Calu3 (cell line): ENCODE measurements at regions of chr10 and their contacts with region 1.

Region 1: GRCh38 chr10:90148116-90148855 is 446.9 kb downstream of the KIF20B start:
- DNase-seq: peak; percentile 14
- H3K4me3 Mint-ChIP-seq: no peak overlapping the region
- H3K27ac Mint-ChIP-seq: no peak overlapping the region
- H3K4me1 Mint-ChIP-seq: no peaks in the 10 kb centered on the region
- H3K27me3 Mint-ChIP-seq: no peaks in the 10 kb centered on the region
- CTCF ChIP-seq: peak; percentile 15

Region 2: GRCh38 chr10:89929282-89930026 is 218.8 kb before region 1 on chr10:
- CTCF ChIA-PET with region 1: no interaction called
- intact Hi-C with region 1: no loop called
- DNase-seq: no peak
- H3K4me3 Mint-ChIP-seq: no peak overlapping the region
- H3K27ac Mint-ChIP-seq: no peak overlapping the region
- H3K4me1 Mint-ChIP-seq: no peaks in the 10 kb centered on the region
- H3K27me3 Mint-ChIP-seq: peaks cover 2% of the 10 kb centered on the region
- CTCF ChIP-seq: no peak

Region 3: DNA sequence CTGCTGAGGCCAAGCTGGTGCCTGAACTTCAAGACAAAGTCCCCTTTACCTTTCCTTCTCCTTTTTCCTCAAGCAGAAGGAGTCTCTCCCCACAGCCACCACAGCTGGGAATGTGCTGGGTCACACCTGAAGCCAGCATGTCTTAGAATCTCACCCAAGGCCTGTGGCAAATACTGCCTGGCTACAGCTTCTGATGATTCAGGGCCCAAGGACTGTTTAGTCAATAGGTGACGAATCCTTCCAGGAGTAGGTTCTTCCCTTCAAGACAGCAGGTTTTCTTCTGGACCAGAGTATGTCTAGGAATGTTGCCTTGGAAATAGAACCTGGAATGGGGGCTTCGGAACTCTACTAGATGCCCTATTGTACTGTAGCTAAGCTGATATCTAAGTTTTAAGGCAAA is 72.3 kb before region 1 on chr10:
- CTCF ChIA-PET with region 1: no interaction called
- intact Hi-C with region 1: no loop called
- DNase-seq: no peak
- H3K4me3 Mint-ChIP-seq: no peak overlapping the region
- H3K27ac Mint-ChIP-seq: no peak overlapping the region
- H3K4me1 Mint-ChIP-seq: no peaks in the 10 kb centered on the region
- H3K27me3 Mint-ChIP-seq: no peaks in the 10 kb centered on the region
- CTCF ChIP-seq: no peak

Region 4: DNA sequence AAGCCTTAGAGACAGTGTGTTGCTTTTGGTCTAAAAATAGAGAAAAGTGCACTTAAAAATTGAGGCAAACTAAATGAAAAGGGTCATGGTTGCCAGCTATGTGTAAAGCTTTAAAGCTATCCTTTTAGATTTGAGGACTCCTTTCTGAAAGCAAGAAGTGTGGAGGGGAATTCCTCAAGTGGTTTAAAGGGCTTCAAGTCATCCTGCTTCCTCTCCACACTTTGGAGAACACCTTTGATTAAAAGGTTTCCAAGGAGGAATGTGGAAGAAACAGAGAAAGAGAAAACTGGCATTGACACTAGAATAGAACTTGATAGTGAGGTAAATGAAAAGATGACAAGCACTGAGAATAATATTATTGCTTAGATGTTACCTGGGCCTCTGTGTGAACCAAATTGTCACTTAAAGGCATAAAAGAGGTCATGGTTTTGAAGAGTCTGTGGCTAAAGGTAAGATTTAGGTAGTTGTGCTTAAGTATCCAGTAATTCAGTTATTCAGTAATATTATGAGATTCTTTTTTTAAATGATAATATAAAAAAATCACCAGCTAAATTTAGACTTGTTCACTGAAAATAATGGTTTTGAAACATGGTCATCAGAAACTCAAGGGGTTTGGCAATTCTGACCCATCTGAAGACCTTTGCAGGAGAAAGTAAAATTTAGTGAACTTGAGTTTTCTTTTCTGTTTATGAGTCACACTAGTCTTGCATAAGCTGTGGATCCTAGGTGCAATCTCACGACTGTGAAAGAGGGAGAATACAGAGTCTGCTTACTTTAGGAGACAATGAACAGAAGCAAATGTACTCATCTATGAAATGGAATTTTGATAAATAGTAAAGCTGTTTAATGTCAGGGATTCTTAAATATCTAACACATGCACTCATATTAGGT is 19.1 kb after region 1 on chr10:
- CTCF ChIA-PET with region 1: no interaction called
- intact Hi-C with region 1: no loop called
- DNase-seq: no peak
- H3K4me3 Mint-ChIP-seq: no peak overlapping the region
- H3K27ac Mint-ChIP-seq: no peak overlapping the region
- H3K4me1 Mint-ChIP-seq: no peaks in the 10 kb centered on the region
- H3K27me3 Mint-ChIP-seq: peaks cover 22% of the 10 kb centered on the region
- CTCF ChIP-seq: no peak

Region 5: GRCh38 chr10:90592638-90593302 is 444.5 kb after region 1 on chr10:
- CTCF ChIA-PET with region 1: interaction called, 8 read pairs
- intact Hi-C with region 1: loop called (anchors 10 kb)
- DNase-seq: peak; percentile 38
- H3K4me3 Mint-ChIP-seq: no peak overlapping the region
- H3K27ac Mint-ChIP-seq: no peak overlapping the region
- H3K4me1 Mint-ChIP-seq: peaks cover 7% of the 10 kb centered on the region
- H3K27me3 Mint-ChIP-seq: peaks cover 62% of the 10 kb centered on the region
- CTCF ChIP-seq: no peak

Region 6: DNA sequence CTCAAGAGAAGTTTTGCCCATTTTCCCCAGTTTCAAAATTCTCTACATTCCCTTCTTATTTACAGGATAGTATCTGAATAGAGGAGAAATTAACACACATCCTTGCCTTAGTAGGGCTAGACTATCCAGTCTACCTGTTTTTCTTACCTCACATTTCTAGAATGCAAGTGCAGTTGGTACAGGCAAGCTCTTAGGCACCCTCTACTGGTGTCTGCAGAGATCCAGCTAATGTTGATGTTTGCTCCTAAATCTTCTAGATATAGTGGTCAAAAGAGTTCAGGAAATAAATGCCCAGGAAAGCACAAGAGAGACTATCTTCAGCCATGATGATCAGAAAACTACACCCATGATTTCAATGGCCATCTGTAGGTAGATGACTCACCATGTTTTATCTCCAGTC is 504.2 kb after region 1 on chr10:
- CTCF ChIA-PET with region 1: no interaction called
- intact Hi-C with region 1: loop called (anchors 5 kb)
- DNase-seq: no peak
- H3K4me3 Mint-ChIP-seq: no peak overlapping the region
- H3K27ac Mint-ChIP-seq: no peak overlapping the region
- H3K4me1 Mint-ChIP-seq: no peaks in the 10 kb centered on the region
- H3K27me3 Mint-ChIP-seq: peaks cover 14% of the 10 kb centered on the region
- CTCF ChIP-seq: no peak

Region 7: GRCh38 chr10:90787393-90788198 is 639.3 kb after region 1 on chr10:
- CTCF ChIA-PET with region 1: no interaction called
- intact Hi-C with region 1: loop called (anchors 5 kb)
- DNase-seq: peak; percentile 53
- H3K4me3 Mint-ChIP-seq: no peak overlapping the region
- H3K27ac Mint-ChIP-seq: no peak overlapping the region
- H3K4me1 Mint-ChIP-seq: no peaks in the 10 kb centered on the region
- H3K27me3 Mint-ChIP-seq: peaks cover 78% of the 10 kb centered on the region
- CTCF ChIP-seq: peak; percentile 43